CD8-positive, alpha-beta T cell (primary cell): ENCODE measurements at regions of chr11 and their contacts with region 1.

Region 1: DNA sequence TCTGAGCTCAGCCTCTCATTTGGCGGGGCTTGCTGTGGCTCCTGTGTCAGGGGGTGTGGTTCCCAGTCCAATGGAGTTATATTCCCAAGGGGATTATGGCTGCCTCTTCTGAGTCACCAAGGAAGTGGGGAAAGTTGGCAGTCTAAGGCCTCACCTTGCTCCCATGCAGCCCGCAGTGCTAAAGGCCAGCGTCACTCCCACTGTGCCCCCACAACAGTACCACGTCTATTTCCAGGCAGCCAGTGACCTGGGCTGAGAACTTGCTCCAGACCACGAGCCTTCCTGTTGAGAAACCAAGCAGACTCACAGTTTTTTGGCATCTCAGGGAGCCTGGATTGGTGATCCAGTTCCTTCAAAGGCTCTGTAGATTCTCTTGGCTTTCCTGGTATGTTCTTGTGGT is 45.6 kb downstream of the OR2AT4 start:
- DNase-seq: no peak
- ATAC-seq: no peak
- H3K4me3 ChIP-seq: no peak overlapping the region
- H3K4me3 Mint-ChIP-seq: no peak overlapping the region
- H3K27ac ChIP-seq: no peak overlapping the region
- H3K27ac Mint-ChIP-seq: no peak overlapping the region
- H3K4me1 ChIP-seq: no peaks in the 10 kb centered on the region
- H3K4me1 Mint-ChIP-seq: no peaks in the 10 kb centered on the region
- H3K27me3 ChIP-seq: no peaks in the 10 kb centered on the region
- H3K27me3 Mint-ChIP-seq: peaks cover 7% of the 10 kb centered on the region
- CTCF ChIP-seq: no peak

Region 2: GRCh38 chr11:75099635-75100034 is 48.6 kb after region 1 on chr11:
- CTCF ChIA-PET with region 1: no interaction called
- POLR2A ChIA-PET with region 1: no interaction called
- intact Hi-C with region 1: loop called in 1 of 2 experiments (anchors 2 kb)
- DNase-seq: no peak
- ATAC-seq: no peak
- H3K4me3 ChIP-seq: no peak overlapping the region
- H3K4me3 Mint-ChIP-seq: no peak overlapping the region
- H3K27ac ChIP-seq: no peak overlapping the region
- H3K27ac Mint-ChIP-seq: no peak overlapping the region
- H3K4me1 ChIP-seq: no peaks in the 10 kb centered on the region
- H3K4me1 Mint-ChIP-seq: no peaks in the 10 kb centered on the region
- H3K27me3 ChIP-seq: no peaks in the 10 kb centered on the region
- H3K27me3 Mint-ChIP-seq: peaks cover 44% of the 10 kb centered on the region
- CTCF ChIP-seq: no peak